Dendritic cell treated with granulocyte-macrophage colony-stimulating factor and Interleukin-4, amounts not matched to agents 40 ng/mL and 50 ng/mL, for 4 days (primary cell): ENCODE measurements at regions of chr14 and their contacts with region 1.

Region 1: GRCh38 chr14:21071225-21072030 is 1.3 kb downstream of the ARHGEF40 start:
- H3K4me3 Mint-ChIP-seq: peak overlapping the region; percentile 93
- H3K27ac Mint-ChIP-seq: peak overlapping the region; percentile 93
- H3K4me1 Mint-ChIP-seq: peaks cover 67% of the 10 kb centered on the region
- H3K27me3 Mint-ChIP-seq: peaks cover 12% of the 10 kb centered on the region

Region 2: GRCh38 chr14:21092273-21093011 is 21.0 kb after region 1 on chr14:
- intact Hi-C with region 1: loop called (anchors 1 kb)
- H3K4me3 Mint-ChIP-seq: no peak overlapping the region
- H3K27ac Mint-ChIP-seq: no peak overlapping the region
- H3K4me1 Mint-ChIP-seq: peaks cover 60% of the 10 kb centered on the region
- H3K27me3 Mint-ChIP-seq: no peaks in the 10 kb centered on the region

Region 3: DNA sequence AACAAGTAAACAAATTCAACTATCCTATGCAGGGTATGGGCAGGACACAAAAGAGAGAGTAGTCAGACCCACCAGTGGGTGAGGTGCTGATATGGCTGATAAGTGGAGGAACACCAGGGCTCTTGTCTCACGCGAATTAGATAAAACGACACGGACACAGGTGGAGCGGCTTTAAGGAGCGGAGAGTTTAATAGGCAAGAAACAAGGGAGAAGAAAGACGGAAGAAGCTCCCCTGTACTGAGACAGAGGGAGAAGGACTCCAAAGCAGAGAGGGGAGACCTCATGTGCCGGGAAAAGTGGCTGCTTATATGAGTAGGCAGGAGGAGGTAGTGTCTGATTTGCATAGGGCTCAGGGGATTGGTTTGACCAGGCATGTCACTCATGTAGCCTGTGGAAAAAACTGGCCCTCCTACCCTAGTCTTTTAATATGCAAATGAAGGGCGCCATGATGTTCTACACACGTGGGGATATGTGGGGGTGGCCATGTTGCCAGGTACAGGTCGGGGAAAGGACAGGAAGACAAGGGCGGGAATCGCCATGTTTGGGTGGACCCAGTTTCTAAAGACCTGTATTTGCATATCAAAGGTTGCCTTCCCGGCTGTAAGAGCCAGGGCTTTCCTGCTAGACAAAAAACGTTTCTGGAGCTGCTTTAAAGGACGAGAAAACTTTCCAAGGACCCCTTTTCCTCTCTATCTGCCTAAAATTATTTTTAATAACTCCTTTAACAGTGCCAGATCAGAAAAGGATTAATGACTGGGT is 237.2 kb after region 1 on chr14:
- intact Hi-C with region 1: no loop called
- H3K4me3 Mint-ChIP-seq: peak overlapping the region; percentile 75
- H3K27ac Mint-ChIP-seq: peak overlapping the region; percentile 77
- H3K4me1 Mint-ChIP-seq: peaks cover 28% of the 10 kb centered on the region
- H3K27me3 Mint-ChIP-seq: peaks cover 3% of the 10 kb centered on the region